Activated CD4-positive, alpha-beta memory T cell treated with anti-CD3 and anti-CD28 coated beads, Interleukin-2, amount 10 ng/mL, durations not matched to agents 7 days and 5 days (primary cell): ENCODE measurements at regions of chr14 and their contacts with region 1.

Region 1: GRCh38 chr14:24271134-24271833 is at the start of gene RABGGTA:
- DNase-seq: peak; percentile 90
- H3K4me3 Mint-ChIP-seq: peak within 1 kb of the TSS; percentile 86
- H3K27ac Mint-ChIP-seq: peak within 1 kb of the TSS; percentile 92
- H3K4me1 Mint-ChIP-seq: peaks cover 43% of the 10 kb centered on the region
- H3K27me3 Mint-ChIP-seq: no peaks in the 10 kb centered on the region
- total RNA-seq, gene RABGGTA: 40.2 to 41.0 TPM

Region 2: DNA sequence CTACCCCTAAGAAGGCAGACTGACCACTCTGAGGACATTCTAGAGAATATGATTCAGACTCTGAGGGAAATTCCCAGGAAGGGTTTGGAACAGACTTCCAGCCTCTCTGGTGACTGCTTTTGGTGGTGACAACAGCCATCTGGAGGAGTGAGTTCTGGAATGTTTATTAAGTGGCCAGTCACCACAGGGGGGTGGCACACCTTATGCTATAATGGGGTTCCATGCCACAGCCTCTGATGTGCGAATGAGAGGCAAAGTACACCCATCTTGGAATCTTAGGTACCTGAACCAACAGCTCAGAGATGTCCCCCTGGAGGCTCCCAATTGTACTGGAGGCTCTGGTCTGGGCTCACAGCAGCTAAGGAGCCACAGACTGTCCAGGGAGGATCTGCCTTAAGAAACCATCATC is 19.4 kb before region 1 on chr14:
- CTCF ChIA-PET with region 1: interaction called, 90 read pairs
- POLR2A ChIA-PET with region 1: interaction called, 48 read pairs
- DNase-seq: no peak
- H3K4me3 Mint-ChIP-seq: no peak overlapping the region
- H3K27ac Mint-ChIP-seq: no peak overlapping the region
- H3K4me1 Mint-ChIP-seq: peaks cover 43% of the 10 kb centered on the region
- H3K27me3 Mint-ChIP-seq: no peaks in the 10 kb centered on the region

Region 3: GRCh38 chr14:24289649-24290249 is 18.5 kb after region 1 on chr14:
- CTCF ChIA-PET with region 1: interaction called, 7 read pairs
- POLR2A ChIA-PET with region 1: interaction called, 16 read pairs
- DNase-seq: peak; percentile 76
- H3K4me3 Mint-ChIP-seq: no peak overlapping the region
- H3K27ac Mint-ChIP-seq: no peak overlapping the region
- H3K4me1 Mint-ChIP-seq: peaks cover 23% of the 10 kb centered on the region
- H3K27me3 Mint-ChIP-seq: peaks cover 22% of the 10 kb centered on the region